Naive thymus-derived CD4-positive, alpha-beta T cell (primary cell): ENCODE measurements at regions of chr5 and their contacts with region 1.

Region 1: DNA sequence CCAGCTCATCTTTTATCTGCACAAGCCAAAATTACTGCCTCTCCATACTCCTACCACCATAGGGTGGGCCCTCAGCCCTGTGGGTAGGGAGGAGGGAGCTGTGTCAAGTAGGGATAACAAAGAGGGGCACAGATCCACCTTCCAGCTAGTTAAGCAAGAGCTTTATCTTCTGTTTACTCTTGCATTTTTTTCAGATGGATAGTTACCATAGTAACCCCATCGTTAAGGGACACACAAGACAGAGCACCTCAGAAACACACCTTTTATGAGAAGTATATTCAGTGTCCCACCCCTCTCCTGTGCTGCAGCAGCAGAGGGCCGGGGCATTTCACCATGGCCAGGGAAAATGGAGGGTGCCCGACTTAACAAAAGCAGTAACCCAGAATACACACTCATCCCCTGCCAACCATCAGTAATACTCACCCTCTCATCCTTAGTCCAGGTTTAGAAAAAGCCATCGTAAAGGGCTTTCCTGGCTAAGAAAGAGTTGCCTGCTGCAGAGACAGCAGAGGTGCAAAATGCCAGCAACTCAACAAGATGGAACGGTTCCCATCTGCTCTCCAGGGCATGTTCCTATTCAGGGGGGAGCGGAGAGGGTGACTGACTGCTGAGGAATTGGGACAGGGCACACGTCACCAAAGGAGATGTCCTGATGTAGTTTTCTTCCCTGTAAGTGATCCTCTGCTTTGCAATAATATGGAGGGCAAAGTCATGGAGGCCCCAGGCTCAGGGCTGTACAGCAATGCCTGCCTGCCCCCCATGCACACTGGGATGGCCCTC is 25.1 kb downstream of the MACROH2A1 start:
- DNase-seq: peak in 2 of 9 donors; percentile 16 to 22
- ATAC-seq: peak; percentile 38
- H3K4me3 ChIP-seq: no peak overlapping the region
- H3K4me3 Mint-ChIP-seq: peak overlapping the region in 1 of 10 donors; percentile 47
- H3K27ac ChIP-seq: no peak overlapping the region
- H3K27ac Mint-ChIP-seq: peak overlapping the region in 4 of 9 donors; percentile 48 to 88 (median 66)
- H3K4me1 ChIP-seq: peaks cover 0 to 23% of the 10 kb centered on the region in 2 donors
- H3K4me1 Mint-ChIP-seq: peaks cover 43 to 81% (median 59%) of the 10 kb centered on the region in 7 donors
- H3K27me3 ChIP-seq: no peaks in the 10 kb centered on the region
- H3K27me3 Mint-ChIP-seq: no peaks in the 10 kb centered on the region

Region 2: GRCh38 chr5:135398853-135399523 is 25.1 kb after region 1 on chr5 and contains the start of gene MACROH2A1:
- CTCF ChIA-PET with region 1: no interaction called
- POLR2A ChIA-PET with region 1: no interaction called
- intact Hi-C with region 1: loop called in 1 of 2 experiments (anchors 2 kb)
- DNase-seq: peak; percentile 66 to 88 (median 76)
- ATAC-seq: peak; percentile 94
- H3K4me3 ChIP-seq: peak within 1 kb of the TSS; percentile 66
- H3K4me3 Mint-ChIP-seq: peak within 1 kb of the TSS; percentile 79 to 95 (median 92)
- H3K27ac ChIP-seq: peak within 1 kb of the TSS; percentile 75
- H3K27ac Mint-ChIP-seq: peak within 1 kb of the TSS; percentile 76 to 96 (median 85)
- H3K4me1 ChIP-seq: peaks cover 17 to 31% of the 10 kb centered on the region in 2 donors
- H3K4me1 Mint-ChIP-seq: peaks cover 33 to 58% (median 53%) of the 10 kb centered on the region in 7 donors
- H3K27me3 ChIP-seq: no peaks in the 10 kb centered on the region
- H3K27me3 Mint-ChIP-seq: peaks cover 0 to 14% (median 0%) of the 10 kb centered on the region in 5 donors
- total RNA-seq, gene MACROH2A1: 109 to 288 (median 140) TPM